Mammary epithelial cell (primary cell): ENCODE measurements at regions of chr5 and their contacts with region 1.

Region 1: DNA sequence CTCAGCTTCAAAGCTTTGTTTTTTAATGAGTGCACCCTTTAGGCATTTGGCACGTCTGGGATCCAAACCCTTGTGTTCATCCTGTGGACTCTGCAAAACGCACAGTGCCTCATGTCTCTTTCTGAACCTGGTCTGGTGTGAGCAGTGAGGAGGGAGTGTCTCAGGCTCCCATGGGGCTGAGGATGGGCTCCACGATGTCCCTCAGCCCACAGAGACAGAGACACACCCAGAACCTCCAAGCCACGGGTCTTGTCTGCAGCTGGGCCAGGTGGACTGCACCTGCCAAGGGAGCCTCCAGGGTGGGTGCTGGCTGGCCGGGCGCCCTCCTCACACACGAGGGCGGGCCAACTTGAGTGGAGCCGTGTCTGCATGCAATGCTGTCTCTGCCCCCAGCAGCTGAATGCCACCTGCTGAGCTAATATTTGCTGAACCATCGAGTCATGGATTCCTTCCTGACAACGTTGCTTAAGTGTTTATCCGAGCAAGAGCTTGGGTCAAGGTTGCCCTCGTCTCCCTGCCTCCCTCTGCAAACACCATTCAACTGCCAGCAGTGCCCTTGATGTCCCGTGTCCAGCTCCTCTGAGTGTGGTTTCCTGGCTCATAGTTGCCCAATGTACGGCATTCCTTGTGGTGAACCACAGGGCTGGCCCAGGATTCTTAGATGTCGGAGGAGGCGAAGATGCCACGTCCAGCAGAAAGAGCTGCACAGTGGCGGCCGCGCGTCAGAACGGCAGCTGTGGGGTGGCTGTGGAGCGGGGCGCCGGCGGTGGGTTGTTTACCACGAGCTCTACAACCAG is 31.4 kb upstream of the LPCAT1 start:
- DNase-seq: peak; percentile 85
- H3K4me3 ChIP-seq: no peak overlapping the region
- H3K27ac ChIP-seq: no peak overlapping the region
- H3K4me1 ChIP-seq: peaks cover 17% of the 10 kb centered on the region
- H3K27me3 ChIP-seq: peaks cover 41% of the 10 kb centered on the region
- CTCF ChIP-seq: no peak

Region 2: DNA sequence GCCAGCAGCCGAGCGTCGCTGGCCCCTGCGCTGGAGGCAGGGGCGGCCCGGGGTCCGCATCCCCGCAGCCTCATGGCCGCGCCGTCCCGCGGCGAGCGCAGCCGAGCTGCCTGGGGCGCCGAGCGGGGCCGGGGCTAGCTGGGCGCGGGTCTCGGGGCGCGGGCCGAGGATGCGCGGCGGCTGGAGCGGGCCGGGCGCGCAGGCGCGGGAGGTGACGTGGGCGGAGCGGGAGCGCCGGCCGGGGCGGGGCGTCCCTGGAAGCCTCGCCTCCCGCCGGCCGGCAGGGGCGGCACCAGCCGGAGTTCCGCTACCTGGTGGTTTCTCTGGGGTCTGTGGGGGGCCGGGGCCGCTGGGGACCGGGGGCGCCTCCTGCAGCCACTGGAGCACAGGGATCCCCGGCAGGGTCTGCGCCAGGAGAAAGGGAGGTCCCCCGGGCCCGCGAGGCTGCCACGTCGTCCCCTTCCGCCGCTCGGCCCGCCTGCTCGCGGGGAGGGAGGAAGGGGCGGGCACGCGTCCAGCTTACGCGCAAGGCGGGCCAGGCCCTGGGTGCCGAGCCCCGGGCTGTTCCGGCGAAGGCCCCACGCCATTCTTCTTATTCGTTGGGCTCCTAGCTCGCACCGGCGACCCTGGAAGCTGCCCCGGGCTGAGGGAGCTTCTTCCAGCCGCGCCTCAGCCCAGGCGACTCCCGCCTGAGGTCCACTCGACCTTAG is 31.3 kb before region 1 on chr5 and contains the start of gene LPCAT1:
- CTCF ChIA-PET with region 1: no interaction called
- dilution Hi-C with region 1: loop called (anchors 5 kb)
- in situ Hi-C with region 1: no loop called
- intact Hi-C with region 1: no loop called
- DNase-seq: peak; percentile 60
- H3K4me3 ChIP-seq: peak within 1 kb of the TSS; percentile 54 to 84 (median 66)
- H3K27ac ChIP-seq: peak within 1 kb of the TSS; percentile 44
- H3K4me1 ChIP-seq: peaks cover 16% of the 10 kb centered on the region
- H3K27me3 ChIP-seq: no peaks in the 10 kb centered on the region
- CTCF ChIP-seq: peak in 1 of 2 donors; percentile 6
- total RNA-seq, gene LPCAT1: 37.1 to 43.5 TPM